ENCODE measurements at regions of chr12 and their contacts with region 1.

Region 1: DNA sequence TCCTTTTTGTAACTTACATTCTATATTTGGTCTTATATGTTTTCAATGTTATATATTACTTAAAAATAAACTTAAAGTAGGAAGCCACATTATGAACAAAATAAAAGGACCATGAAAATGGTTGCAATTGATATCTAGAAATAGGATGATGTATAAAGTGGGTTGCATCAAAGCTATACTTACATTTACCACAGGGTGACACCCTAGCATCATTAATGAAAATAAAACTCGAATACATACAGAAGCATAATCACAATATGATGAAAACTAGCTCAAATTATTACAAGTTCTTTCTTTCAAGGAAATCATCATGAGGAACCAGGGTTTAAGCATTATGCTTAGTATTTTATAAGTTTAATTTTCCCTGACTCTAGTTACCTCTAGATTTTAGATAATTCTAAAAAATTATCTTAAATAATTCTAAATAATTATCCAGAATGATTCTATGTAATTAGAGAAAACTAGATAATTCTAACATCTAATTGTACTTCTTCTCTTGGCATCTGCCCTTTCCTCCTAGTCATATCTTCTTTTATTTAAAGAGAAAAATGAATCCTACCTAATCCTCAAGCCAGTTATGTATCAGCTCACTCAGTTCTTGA is 31.2 kb downstream of the TAS2R7 start:
- DNase-seq: peak in 1 of 2 donors; percentile 64
- H3K4me3 ChIP-seq: no peak overlapping the region
- H3K27ac ChIP-seq: no peak overlapping the region
- H3K4me1 ChIP-seq: no peaks in the 10 kb centered on the region
- H3K27me3 ChIP-seq: peaks cover 0 to 45% (median 6%) of the 10 kb centered on the region in 3 donors
- CTCF ChIP-seq: peak in 5 of 7 experiments; percentile 37 to 68 (median 60)
- EP300 ChIP-seq: no peak
- POLR2A ChIP-seq: no peak

Region 2: GRCh38 chr12:11202811-11203210 is 431.6 kb after region 1 on chr12:
- intact Hi-C with region 1: loop called (anchors 5 kb)
- DNase-seq: no peak
- H3K4me3 ChIP-seq: no peak overlapping the region
- H3K27ac ChIP-seq: no peak overlapping the region
- H3K4me1 ChIP-seq: no peaks in the 10 kb centered on the region
- H3K27me3 ChIP-seq: no peaks in the 10 kb centered on the region
- CTCF ChIP-seq: no peak
- EP300 ChIP-seq: no peak
- POLR2A ChIP-seq: no peak

Region 3: DNA sequence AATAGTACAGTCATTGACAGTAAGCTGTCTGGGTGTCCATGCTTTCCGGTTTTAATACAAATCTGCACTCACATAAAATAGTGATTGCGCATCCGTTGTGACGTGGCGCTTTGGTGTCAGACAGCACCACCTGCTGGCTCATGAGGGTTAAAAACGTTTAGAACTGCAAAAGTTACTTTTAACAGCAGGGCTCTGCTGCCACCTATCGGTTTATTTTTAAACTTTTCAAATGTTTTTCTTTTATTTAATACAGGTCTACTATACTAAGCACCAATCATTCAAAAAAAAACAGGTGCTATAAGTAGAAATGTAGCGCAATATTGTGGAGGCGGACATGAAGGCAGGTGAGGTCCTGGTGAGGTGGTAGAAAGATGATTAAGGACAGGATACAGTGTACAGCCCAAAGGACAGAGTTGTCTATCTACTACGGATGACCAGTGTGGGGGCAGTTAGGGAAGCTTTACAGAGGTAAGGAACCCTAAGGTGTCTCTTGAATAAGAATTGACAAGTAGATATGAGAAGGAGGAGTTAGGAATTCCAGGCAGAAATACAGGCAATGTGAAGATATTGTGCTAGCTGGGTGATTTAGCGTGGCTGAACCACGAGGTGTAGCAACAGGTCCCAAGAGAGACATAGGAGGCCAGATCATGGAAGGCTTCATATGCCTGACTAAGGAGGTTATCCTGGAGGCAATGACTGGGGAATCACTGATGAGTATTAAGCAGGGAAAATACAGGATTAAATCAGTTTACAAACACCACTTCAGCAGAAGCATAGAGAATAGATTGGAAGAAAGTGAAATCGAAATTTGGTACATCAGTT is 715.6 kb after region 1 on chr12:
- intact Hi-C with region 1: loop called (anchors 5 kb)
- DNase-seq: peak; percentile 75 to 94
- H3K4me3 ChIP-seq: no peak overlapping the region
- H3K27ac ChIP-seq: no peak overlapping the region
- H3K4me1 ChIP-seq: peaks cover 0 to 4% (median 0%) of the 10 kb centered on the region in 4 donors
- H3K27me3 ChIP-seq: peaks cover 0 to 8% (median 0%) of the 10 kb centered on the region in 3 donors
- CTCF ChIP-seq: peak in 6 of 7 experiments; percentile 27 to 94 (median 73)
- EP300 ChIP-seq: no peak
- POLR2A ChIP-seq: no peak